CD4-positive, alpha-beta memory T cell (primary cell): ENCODE measurements at regions of chr22 and their contacts with region 1.

Region 1: GRCh38 chr22:39532215-39533071 is at the start of gene RPS19BP1:
- DNase-seq: peak; percentile 98 to 100 (median 99)
- H3K4me3 ChIP-seq: peak within 1 kb of the TSS; percentile 71 to 91
- H3K4me3 Mint-ChIP-seq: peak within 1 kb of the TSS; percentile 92 to 98 (median 96)
- H3K27ac ChIP-seq: peak within 1 kb of the TSS; percentile 93
- H3K27ac Mint-ChIP-seq: peak within 1 kb of the TSS; percentile 93 to 100 (median 97)
- H3K4me1 ChIP-seq: peaks cover 56% of the 10 kb centered on the region
- H3K4me1 Mint-ChIP-seq: peaks cover 35 to 61% (median 51%) of the 10 kb centered on the region in 4 donors
- H3K27me3 ChIP-seq: no peaks in the 10 kb centered on the region
- H3K27me3 Mint-ChIP-seq: no peaks in the 10 kb centered on the region
- total RNA-seq, gene RPS19BP1: 66.9 to 67.1 TPM

Region 2: GRCh38 chr22:39395936-39396796 is 136.3 kb before region 1 on chr22:
- CTCF ChIA-PET with region 1: interaction called, 19 read pairs
- POLR2A ChIA-PET with region 1: interaction called, 7 read pairs
- intact Hi-C with region 1: loop called (anchors 1 kb)
- DNase-seq: no peak
- H3K4me3 ChIP-seq: no peak overlapping the region
- H3K4me3 Mint-ChIP-seq: peak overlapping the region in 2 of 8 donors; percentile 37 to 45
- H3K27ac ChIP-seq: no peak overlapping the region
- H3K27ac Mint-ChIP-seq: peak overlapping the region in 2 of 7 donors; percentile 20 to 39
- H3K4me1 ChIP-seq: peaks cover 12% of the 10 kb centered on the region
- H3K4me1 Mint-ChIP-seq: peaks cover 4 to 19% (median 11%) of the 10 kb centered on the region in 4 donors
- H3K27me3 ChIP-seq: no peaks in the 10 kb centered on the region
- H3K27me3 Mint-ChIP-seq: no peaks in the 10 kb centered on the region

Region 3: GRCh38 chr22:39496131-39496838 is 36.2 kb before region 1 on chr22:
- CTCF ChIA-PET with region 1: interaction called, 345 read pairs
- POLR2A ChIA-PET with region 1: interaction called, 38 read pairs
- intact Hi-C with region 1: loop called (anchors 1 kb)
- DNase-seq: peak; percentile 42 to 65 (median 46)
- H3K4me3 ChIP-seq: no peak overlapping the region
- H3K4me3 Mint-ChIP-seq: no peak overlapping the region
- H3K27ac ChIP-seq: no peak overlapping the region
- H3K27ac Mint-ChIP-seq: peak overlapping the region in 5 of 7 donors; percentile 3 to 75 (median 30)
- H3K4me1 ChIP-seq: no peaks in the 10 kb centered on the region
- H3K4me1 Mint-ChIP-seq: peaks cover 3 to 11% (median 9%) of the 10 kb centered on the region in 4 donors
- H3K27me3 ChIP-seq: no peaks in the 10 kb centered on the region
- H3K27me3 Mint-ChIP-seq: no peaks in the 10 kb centered on the region

Region 4: DNA sequence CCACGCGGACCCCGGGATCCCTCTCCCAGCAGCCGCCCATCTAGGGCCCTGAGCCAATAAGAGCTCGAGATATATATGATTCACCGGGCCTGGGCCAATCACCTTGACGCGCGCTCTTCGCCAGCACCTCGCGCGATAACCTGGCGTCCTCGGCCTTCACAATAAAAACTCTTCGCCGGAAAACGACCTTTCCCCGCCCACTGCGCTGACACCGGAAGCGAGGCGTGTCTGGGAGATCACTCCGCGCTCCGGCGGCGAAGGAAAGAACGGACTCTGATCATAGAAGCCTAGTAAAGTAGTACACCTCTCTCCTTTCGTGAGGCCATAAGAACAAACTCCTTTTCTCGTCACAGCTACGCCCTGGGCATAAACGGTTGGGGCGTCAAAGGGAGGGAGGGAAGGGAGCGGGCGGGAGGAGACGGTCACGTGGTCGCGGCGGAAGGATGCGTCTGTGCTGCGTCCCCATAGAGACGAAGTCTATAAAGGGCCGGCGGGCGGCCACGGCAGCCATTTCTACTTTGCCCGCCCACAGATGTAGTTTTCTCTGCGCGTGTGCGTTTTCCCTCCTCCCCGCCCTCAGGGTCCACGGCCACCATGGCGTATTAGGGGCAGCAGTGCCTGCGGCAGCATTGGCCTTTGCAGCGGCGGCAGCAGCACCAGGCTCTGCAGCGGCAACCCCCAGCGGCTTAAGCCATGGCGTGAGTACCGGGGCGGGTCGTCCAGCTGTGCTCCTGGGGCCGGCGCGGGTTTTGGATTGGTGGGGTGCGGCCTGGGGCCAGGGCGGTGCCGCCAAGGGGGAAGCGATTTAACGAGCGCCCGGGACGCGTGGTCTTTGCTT is 12.2 kb before region 1 on chr22 and contains the start of gene ATF4:
- CTCF ChIA-PET with region 1: interaction called, 100 read pairs
- POLR2A ChIA-PET with region 1: interaction called, 157 read pairs
- intact Hi-C with region 1: loop called (anchors 1 kb)
- DNase-seq: peak; percentile 96 to 98 (median 97)
- H3K4me3 ChIP-seq: peak within 1 kb of the TSS; percentile 85 to 96
- H3K4me3 Mint-ChIP-seq: peak within 1 kb of the TSS; percentile 92 to 99 (median 97)
- H3K27ac ChIP-seq: peak within 1 kb of the TSS; percentile 85
- H3K27ac Mint-ChIP-seq: peak within 1 kb of the TSS; percentile 96 to 100 (median 99)
- H3K4me1 ChIP-seq: peaks cover 46% of the 10 kb centered on the region
- H3K4me1 Mint-ChIP-seq: peaks cover 28 to 60% (median 47%) of the 10 kb centered on the region in 4 donors
- H3K27me3 ChIP-seq: no peaks in the 10 kb centered on the region
- H3K27me3 Mint-ChIP-seq: peaks cover 3 to 4% of the 10 kb centered on the region in 2 donors
- total RNA-seq, gene ATF4: 265 to 278 TPM

Region 5: GRCh38 chr22:39690881-39691605 is 158.6 kb after region 1 on chr22:
- CTCF ChIA-PET with region 1: no interaction called
- POLR2A ChIA-PET with region 1: no interaction called
- intact Hi-C with region 1: no loop called
- DNase-seq: no peak
- H3K4me3 ChIP-seq: no peak overlapping the region
- H3K4me3 Mint-ChIP-seq: no peak overlapping the region
- H3K27ac ChIP-seq: no peak overlapping the region
- H3K27ac Mint-ChIP-seq: no peak overlapping the region
- H3K4me1 ChIP-seq: no peaks in the 10 kb centered on the region
- H3K4me1 Mint-ChIP-seq: peaks cover 4 to 18% (median 5%) of the 10 kb centered on the region in 4 donors
- H3K27me3 ChIP-seq: no peaks in the 10 kb centered on the region
- H3K27me3 Mint-ChIP-seq: peaks cover 3 to 13% of the 10 kb centered on the region in 2 donors

Region 6: GRCh38 chr22:39946503-39947219 is 414.2 kb after region 1 on chr22:
- CTCF ChIA-PET with region 1: interaction called, 19 read pairs
- POLR2A ChIA-PET with region 1: no interaction called
- intact Hi-C with region 1: no loop called
- DNase-seq: no peak
- H3K4me3 ChIP-seq: no peak overlapping the region
- H3K4me3 Mint-ChIP-seq: peak overlapping the region; percentile 29 to 62 (median 43)
- H3K27ac ChIP-seq: peak overlapping the region; percentile 6
- H3K27ac Mint-ChIP-seq: peak overlapping the region in 6 of 7 donors; percentile 60 to 94 (median 86)
- H3K4me1 ChIP-seq: peaks cover 100% of the 10 kb centered on the region
- H3K4me1 Mint-ChIP-seq: peaks cover 76 to 100% (median 90%) of the 10 kb centered on the region in 4 donors
- H3K27me3 ChIP-seq: no peaks in the 10 kb centered on the region
- H3K27me3 Mint-ChIP-seq: no peaks in the 10 kb centered on the region

Region 7: DNA sequence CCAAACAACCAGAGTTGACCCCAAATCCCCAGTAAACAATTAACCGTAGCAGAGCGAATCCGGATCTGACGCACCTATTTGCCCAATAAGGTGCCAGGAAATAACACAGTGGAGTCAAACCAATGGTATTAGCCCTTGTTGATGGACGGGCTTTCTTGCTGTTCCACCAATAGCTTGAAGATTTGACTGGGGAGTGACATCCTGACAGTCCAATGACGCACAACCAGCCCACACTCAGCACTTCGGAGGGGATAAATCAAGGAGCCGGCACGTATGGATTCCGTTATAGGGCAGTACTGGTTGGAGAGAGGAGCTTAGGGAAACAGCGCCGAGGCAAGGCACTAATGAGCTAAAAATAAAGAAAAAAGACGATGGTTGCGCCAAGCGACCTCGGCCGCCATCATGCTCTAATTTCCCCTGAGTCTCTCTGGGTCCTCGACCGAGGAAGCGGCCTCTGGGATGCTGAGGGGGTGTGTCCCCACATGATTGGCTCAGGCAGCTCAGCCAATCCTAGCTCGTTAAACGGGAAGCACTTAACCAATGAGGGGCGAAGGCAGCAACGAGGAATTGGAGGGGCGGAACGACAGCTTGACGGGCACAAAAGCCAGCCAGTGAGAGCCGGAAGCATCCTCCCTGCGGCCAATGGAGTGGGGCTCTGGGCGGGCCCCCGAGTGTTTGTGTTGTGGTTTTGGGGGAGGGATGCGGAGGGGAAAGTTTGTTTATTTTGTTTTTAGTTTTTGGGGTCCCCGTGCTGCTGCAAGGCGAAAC is 511.8 kb after region 1 on chr22:
- CTCF ChIA-PET with region 1: interaction called, 15 read pairs
- POLR2A ChIA-PET with region 1: interaction called, 41 read pairs
- intact Hi-C with region 1: loop called (anchors 1 kb)
- DNase-seq: peak; percentile 99 to 100 (median 99)
- H3K4me3 ChIP-seq: peak overlapping the region; percentile 60 to 67
- H3K4me3 Mint-ChIP-seq: peak overlapping the region; percentile 95 to 100 (median 98)
- H3K27ac ChIP-seq: peak overlapping the region; percentile 88
- H3K27ac Mint-ChIP-seq: peak overlapping the region; percentile 99 to 100 (median 100)
- H3K4me1 ChIP-seq: peaks cover 32% of the 10 kb centered on the region
- H3K4me1 Mint-ChIP-seq: peaks cover 22 to 47% (median 36%) of the 10 kb centered on the region in 4 donors
- H3K27me3 ChIP-seq: no peaks in the 10 kb centered on the region
- H3K27me3 Mint-ChIP-seq: peaks cover 4 to 10% of the 10 kb centered on the region in 2 donors